PC-9 (cell line): ENCODE measurements at regions of chr5 and their contacts with region 1.

Region 1: GRCh38 chr5:132820162-132820754 is 7.2 kb downstream of the SOWAHA start:
- DNase-seq: peak; percentile 72 to 81
- H3K4me3 ChIP-seq: no peak overlapping the region
- H3K27ac ChIP-seq: no peak overlapping the region
- H3K4me1 ChIP-seq: peaks cover 14% of the 10 kb centered on the region
- H3K27me3 ChIP-seq: no peaks in the 10 kb centered on the region
- CTCF ChIP-seq: peak; percentile 96

Region 2: GRCh38 chr5:132410451-132411381 is 409.5 kb before region 1 on chr5:
- CTCF ChIA-PET with region 1: no interaction called
- POLR2A ChIA-PET with region 1: interaction called, 12 read pairs
- intact Hi-C with region 1: no loop called
- DNase-seq: peak; percentile 64 to 80
- H3K4me3 ChIP-seq: peak overlapping the region; percentile 79
- H3K27ac ChIP-seq: peak overlapping the region; percentile 92
- H3K4me1 ChIP-seq: peaks cover 59% of the 10 kb centered on the region
- H3K27me3 ChIP-seq: no peaks in the 10 kb centered on the region
- CTCF ChIP-seq: peak; percentile 73

Region 3: DNA sequence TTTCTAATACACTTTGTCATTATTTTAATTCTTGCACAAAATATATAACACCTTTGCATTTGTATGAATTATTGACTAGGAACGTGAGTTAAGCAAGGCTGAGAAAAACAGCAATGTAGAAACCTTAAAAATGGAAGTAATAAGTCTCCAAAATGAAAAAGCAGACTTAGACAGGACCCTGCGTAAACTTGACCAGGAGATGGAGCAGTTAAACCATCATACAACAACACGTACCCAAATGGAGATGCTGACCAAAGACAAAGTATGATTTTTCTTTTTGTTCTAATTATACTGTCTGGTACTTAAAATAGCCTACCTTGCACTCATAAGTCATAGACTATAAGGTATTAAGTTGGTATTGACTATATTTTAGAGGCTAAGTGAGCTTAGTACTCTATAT is 229.1 kb before region 1 on chr5:
- CTCF ChIA-PET with region 1: no interaction called
- POLR2A ChIA-PET with region 1: no interaction called
- intact Hi-C with region 1: loop called (anchors 1 kb)
- DNase-seq: no peak
- H3K4me3 ChIP-seq: no peak overlapping the region
- H3K27ac ChIP-seq: no peak overlapping the region
- H3K4me1 ChIP-seq: no peaks in the 10 kb centered on the region
- H3K27me3 ChIP-seq: no peaks in the 10 kb centered on the region
- CTCF ChIP-seq: no peak

Region 4: GRCh38 chr5:132746954-132747615 is 73.2 kb before region 1 on chr5 and contains the start of gene CCNI2:
- CTCF ChIA-PET with region 1: interaction called, 3 read pairs
- POLR2A ChIA-PET with region 1: interaction called, 4 read pairs
- intact Hi-C with region 1: loop called (anchors 2 kb)
- DNase-seq: peak in 1 of 2 experiments; percentile 55
- H3K4me3 ChIP-seq: peak within 1 kb of the TSS; percentile 59
- H3K27ac ChIP-seq: no peak within 1 kb of the TSS
- H3K4me1 ChIP-seq: no peaks in the 10 kb centered on the region
- H3K27me3 ChIP-seq: no peaks in the 10 kb centered on the region
- CTCF ChIP-seq: peak; percentile 41; the same call in 1 of the 2 replicates
- total RNA-seq, gene CCNI2: 1.2 and 1.7 TPM in 2 replicates

Region 5: GRCh38 chr5:133952729-133953567 is 1132.7 kb after region 1 on chr5:
- CTCF ChIA-PET with region 1: interaction called, 14 read pairs
- POLR2A ChIA-PET with region 1: no interaction called
- intact Hi-C with region 1: no loop called
- DNase-seq: no peak
- H3K4me3 ChIP-seq: no peak overlapping the region
- H3K27ac ChIP-seq: no peak overlapping the region
- H3K4me1 ChIP-seq: no peaks in the 10 kb centered on the region
- H3K27me3 ChIP-seq: no peaks in the 10 kb centered on the region
- CTCF ChIP-seq: no peak